PC-9 (cell line): ENCODE measurements at regions of chr9 and their contacts with region 1.

Region 1: DNA sequence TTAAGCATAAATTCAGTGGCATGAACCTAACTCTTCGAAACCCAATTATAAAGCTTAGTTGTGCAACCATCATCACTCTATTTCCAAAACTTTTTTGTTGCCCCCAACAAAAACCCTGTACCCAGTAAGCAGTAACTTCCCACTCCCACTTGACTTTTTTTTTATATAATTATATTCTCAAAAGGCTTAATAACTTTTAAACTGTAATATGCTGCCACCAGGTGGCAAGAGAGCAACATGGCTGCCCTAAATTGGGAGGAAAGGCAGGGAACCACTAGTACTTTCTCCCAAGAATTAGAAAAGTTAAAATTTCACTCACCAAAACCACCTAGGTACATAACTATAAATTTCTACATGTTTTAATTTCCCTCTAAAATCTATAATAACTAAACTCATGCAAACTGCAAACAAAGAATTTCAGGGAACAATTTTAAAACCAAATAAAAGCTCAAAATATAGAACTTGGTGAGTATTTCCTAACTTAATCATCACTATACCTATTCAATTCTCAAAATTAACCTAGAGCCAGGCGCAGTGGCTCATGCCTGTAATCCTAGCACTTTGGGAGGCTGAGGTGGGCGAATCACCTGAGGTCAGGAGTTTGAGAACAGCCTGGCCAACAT is 50.2 kb upstream of the RNF38 start:
- DNase-seq: peak; percentile 14 to 37
- H3K4me3 ChIP-seq: no peak overlapping the region
- H3K27ac ChIP-seq: no peak overlapping the region
- H3K4me1 ChIP-seq: no peaks in the 10 kb centered on the region
- H3K27me3 ChIP-seq: no peaks in the 10 kb centered on the region
- CTCF ChIP-seq: peak; percentile 78

Region 2: GRCh38 chr9:36110434-36110833 is 339.8 kb before region 1 on chr9:
- CTCF ChIA-PET with region 1: no interaction called
- POLR2A ChIA-PET with region 1: interaction called, 15 read pairs
- intact Hi-C with region 1: no loop called
- DNase-seq: no peak
- H3K4me3 ChIP-seq: no peak overlapping the region
- H3K27ac ChIP-seq: no peak overlapping the region
- H3K4me1 ChIP-seq: no peaks in the 10 kb centered on the region
- H3K27me3 ChIP-seq: no peaks in the 10 kb centered on the region
- CTCF ChIP-seq: no peak

Region 3: GRCh38 chr9:36407122-36407723 is 43.0 kb before region 1 on chr9:
- CTCF ChIA-PET with region 1: interaction called, 5 read pairs
- POLR2A ChIA-PET with region 1: no interaction called
- intact Hi-C with region 1: loop called (anchors 1 kb)
- DNase-seq: peak; percentile 37 to 47
- H3K4me3 ChIP-seq: no peak overlapping the region
- H3K27ac ChIP-seq: no peak overlapping the region
- H3K4me1 ChIP-seq: no peaks in the 10 kb centered on the region
- H3K27me3 ChIP-seq: no peaks in the 10 kb centered on the region
- CTCF ChIP-seq: peak; percentile 88

Region 4: DNA sequence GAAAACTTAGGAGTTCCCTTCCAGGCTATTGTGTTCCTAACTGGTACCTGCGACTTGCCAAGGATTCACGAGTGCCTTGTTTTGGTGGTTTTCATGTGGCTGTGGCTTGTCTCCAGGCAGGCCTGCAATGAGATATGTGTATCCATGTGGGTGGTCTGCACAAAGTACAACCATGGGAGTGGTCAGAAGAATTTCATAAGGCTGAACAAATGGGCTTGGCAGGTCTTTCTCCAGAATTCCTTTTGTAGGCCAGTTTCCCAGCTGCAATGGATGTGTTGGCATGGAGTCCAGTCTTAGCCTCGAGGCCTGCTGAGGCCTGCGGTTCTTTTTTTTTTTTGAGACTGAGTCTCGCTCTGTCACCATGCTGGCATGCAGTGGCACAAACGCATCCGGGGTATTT is 93.7 kb after region 1 on chr9:
- CTCF ChIA-PET with region 1: no interaction called
- POLR2A ChIA-PET with region 1: no interaction called
- intact Hi-C with region 1: no loop called
- DNase-seq: no peak
- H3K4me3 ChIP-seq: no peak overlapping the region
- H3K27ac ChIP-seq: no peak overlapping the region
- H3K4me1 ChIP-seq: no peaks in the 10 kb centered on the region
- H3K27me3 ChIP-seq: no peaks in the 10 kb centered on the region
- CTCF ChIP-seq: no peak

Region 5: DNA sequence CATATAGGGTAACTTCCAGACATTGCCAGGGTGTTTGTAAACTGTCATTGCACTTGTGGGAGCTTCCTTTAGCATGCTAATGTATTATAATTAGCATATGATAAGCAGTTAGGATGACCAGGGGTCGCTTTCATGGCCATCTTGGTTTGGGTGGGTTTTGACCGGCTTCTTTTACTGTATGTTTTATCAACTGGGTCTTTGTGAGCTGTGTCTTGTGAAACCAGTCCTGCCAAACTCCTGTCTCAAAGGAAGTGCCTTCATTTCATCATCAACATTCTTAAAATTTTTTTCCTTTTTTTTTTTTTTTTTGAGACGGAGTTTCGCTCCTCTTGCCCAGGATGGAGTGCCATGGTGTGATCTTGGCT is 110.6 kb after region 1 on chr9:
- CTCF ChIA-PET with region 1: no interaction called
- POLR2A ChIA-PET with region 1: no interaction called
- intact Hi-C with region 1: loop called (anchors 5 kb)
- DNase-seq: peak; percentile 5 to 65
- H3K4me3 ChIP-seq: no peak overlapping the region
- H3K27ac ChIP-seq: no peak overlapping the region
- H3K4me1 ChIP-seq: peaks cover 10% of the 10 kb centered on the region; the same call in 1 of the 2 replicates
- H3K27me3 ChIP-seq: no peaks in the 10 kb centered on the region
- CTCF ChIP-seq: no peak